AG04450 (cell line): ENCODE measurements at regions of chr2 and their contacts with region 1.

Region 1: DNA sequence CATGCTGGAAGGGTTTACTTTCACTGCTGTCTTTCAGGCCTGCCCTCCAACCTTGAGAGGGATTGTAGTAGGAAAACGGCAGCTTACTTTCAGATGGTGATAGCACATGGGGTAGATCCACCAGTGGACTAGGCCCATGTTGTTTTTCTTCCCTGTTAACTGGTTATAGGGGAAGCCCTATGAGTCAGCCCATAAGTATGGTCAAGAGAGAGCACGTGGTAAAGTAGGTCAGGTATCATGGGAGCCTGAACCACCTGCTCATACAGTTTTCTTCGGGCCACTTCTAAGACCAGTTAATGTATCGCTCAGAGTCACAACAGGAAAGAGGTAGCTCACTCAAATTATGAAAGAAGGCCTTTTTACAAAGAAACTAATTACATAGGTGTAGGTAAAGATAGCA is 33.0 kb downstream of the PDK1 start:
- DNase-seq: no peak
- H3K4me3 ChIP-seq: no peak overlapping the region
- H3K27ac ChIP-seq: no peak overlapping the region
- H3K27me3 ChIP-seq: no peaks in the 10 kb centered on the region
- CTCF ChIP-seq: no peak

Region 2: DNA sequence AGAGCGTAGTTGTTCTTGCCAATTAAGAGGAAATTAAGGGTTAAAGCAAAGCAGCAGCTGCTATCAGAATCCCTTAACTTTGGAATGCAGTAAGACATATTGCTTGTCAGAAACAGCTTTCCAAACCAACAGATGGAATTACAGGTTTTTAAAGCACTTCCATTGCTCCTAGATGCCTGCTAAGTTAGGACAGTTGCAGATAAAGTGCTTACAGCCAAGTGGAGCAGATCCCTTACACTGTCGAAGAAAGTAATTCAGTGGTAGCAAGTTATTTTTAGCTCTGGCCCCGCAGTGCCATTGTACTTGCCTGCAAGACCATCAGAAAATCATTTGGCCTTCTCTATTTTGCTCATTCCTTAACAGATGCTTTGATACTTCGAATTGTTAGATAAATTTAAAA is 27.7 kb before region 1 on chr2:
- CTCF ChIA-PET with region 1: interaction called, 14 read pairs
- POLR2A ChIA-PET with region 1: no interaction called
- DNase-seq: no peak
- H3K4me3 ChIP-seq: no peak overlapping the region
- H3K27ac ChIP-seq: no peak overlapping the region
- H3K27me3 ChIP-seq: no peaks in the 10 kb centered on the region
- CTCF ChIP-seq: no peak

Region 3: DNA sequence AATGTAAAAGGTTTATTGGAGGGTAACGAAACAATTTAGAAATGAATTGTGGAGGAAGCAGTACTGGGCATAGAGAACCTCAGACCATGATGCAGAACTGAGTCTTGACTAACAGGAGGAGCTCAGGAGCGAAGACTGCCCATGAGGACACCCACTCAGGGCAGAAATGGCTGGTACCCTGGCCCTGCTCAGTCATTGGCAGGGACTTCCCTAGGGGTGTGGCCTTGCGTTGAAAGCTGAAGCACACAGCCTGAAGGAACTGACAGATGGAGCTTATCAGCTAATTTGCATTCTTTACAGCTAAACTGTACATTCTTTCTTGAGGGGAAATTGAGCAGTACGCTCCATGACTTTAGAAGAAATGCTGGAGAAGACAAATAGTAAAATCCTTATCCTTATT is 24.1 kb after region 1 on chr2:
- CTCF ChIA-PET with region 1: interaction called, 17 read pairs
- POLR2A ChIA-PET with region 1: no interaction called
- DNase-seq: no peak
- H3K4me3 ChIP-seq: no peak overlapping the region
- H3K27ac ChIP-seq: no peak overlapping the region
- H3K27me3 ChIP-seq: no peaks in the 10 kb centered on the region
- CTCF ChIP-seq: no peak

Region 4: DNA sequence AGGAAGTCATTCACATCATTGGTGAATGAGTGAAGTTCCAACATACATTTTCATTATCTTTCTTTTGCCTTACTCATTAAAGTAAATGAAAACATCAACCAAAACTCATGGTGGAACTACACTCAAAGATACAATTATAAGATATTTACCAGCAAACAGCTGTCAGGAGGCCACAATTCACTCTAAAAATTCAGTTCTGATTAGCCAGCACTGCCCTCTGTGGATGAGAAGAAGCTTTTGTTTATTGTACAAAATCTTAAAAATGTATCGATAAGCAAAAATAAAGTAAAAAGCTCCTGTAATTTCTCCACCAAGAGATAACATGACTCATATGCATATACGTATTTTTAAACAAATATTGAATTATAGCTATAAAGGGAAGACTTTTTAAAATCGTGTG is 73.2 kb after region 1 on chr2:
- CTCF ChIA-PET with region 1: interaction called, 15 read pairs
- POLR2A ChIA-PET with region 1: no interaction called
- DNase-seq: no peak
- H3K4me3 ChIP-seq: no peak overlapping the region
- H3K27ac ChIP-seq: no peak overlapping the region
- H3K27me3 ChIP-seq: no peaks in the 10 kb centered on the region
- CTCF ChIP-seq: 0 out of 2 replicates have a peak, but pooled peaks have one; percentile 20

Region 5: GRCh38 chr2:172710584-172711024 is 121.7 kb after region 1 on chr2:
- CTCF ChIA-PET with region 1: interaction called, 21 read pairs
- POLR2A ChIA-PET with region 1: no interaction called
- DNase-seq: peak; percentile 74
- H3K4me3 ChIP-seq: no peak overlapping the region
- H3K27ac ChIP-seq: no peak overlapping the region
- H3K27me3 ChIP-seq: no peaks in the 10 kb centered on the region
- CTCF ChIP-seq: peak; percentile 44